ENCODE measurements at regions of chr11 and their contacts with region 1.

Region 1: GRCh38 chr11:64204464-64204989 is 2.0 kb upstream of the FERMT3 start:
- DNase-seq: peak; percentile 68 to 95 (median 83)
- ATAC-seq: peak; percentile 46 to 70 (median 48)
- H3K4me3 ChIP-seq: no peak overlapping the region
- H3K4me3 Mint-ChIP-seq: peak overlapping the region; percentile 17 to 68 (median 65)
- H3K27ac ChIP-seq: no peak overlapping the region
- H3K27ac Mint-ChIP-seq: peak overlapping the region; percentile 85 to 87
- H3K4me1 ChIP-seq: peaks cover 14 to 49% of the 10 kb centered on the region in 2 experiments
- H3K4me1 Mint-ChIP-seq: peaks cover 36 to 47% (median 47%) of the 10 kb centered on the region in 3 donors
- H3K27me3 ChIP-seq: no peaks in the 10 kb centered on the region
- H3K27me3 Mint-ChIP-seq: no peaks in the 10 kb centered on the region

Region 2: DNA sequence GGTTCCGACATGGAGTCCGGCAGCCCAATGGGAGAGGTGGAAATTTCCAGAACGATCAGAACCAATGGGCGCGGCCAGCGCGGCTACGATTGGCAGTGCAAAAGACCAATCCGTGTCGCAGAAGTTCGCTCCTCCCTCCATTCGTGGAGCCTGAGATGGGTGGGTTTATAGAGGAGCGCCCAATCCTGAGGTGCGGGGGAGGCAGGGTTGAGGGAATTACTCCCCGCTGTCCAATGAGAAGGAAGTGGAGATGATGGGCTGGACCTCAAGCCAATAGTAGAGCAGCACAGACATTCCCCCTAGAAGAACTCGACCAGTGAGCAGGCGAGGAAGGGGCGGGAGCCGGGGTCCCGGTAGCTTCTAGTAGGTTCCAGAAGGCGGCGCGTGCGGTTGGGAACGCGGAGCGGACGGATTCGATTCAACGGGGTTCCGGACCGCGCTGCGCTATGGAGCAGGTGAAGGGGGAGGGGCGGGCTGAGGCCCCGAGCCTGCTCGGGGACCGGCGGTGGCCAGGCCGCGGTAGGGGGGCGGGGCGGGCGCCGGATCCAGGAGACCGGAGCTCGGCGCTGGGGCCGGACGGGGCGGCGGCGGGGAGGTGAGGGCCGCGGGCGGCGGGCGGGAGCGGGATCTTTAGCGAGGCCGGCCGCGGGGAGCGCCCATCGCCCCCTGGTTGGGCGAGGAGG is 18.6 kb before region 1 on chr11 and contains the start of gene STIP1:
- CTCF ChIA-PET with region 1: interaction called in 1 of 2 experiments, 15 read pairs
- POLR2A ChIA-PET with region 1: interaction called in 1 of 2 experiments, 3 read pairs
- DNase-seq: peak; percentile 96 to 100 (median 99)
- ATAC-seq: peak; percentile 87 to 90 (median 88)
- H3K4me3 ChIP-seq: peak within 1 kb of the TSS; percentile 73 to 89
- H3K4me3 Mint-ChIP-seq: peak within 1 kb of the TSS in 2 of 3 donors; percentile 92 to 99
- H3K27ac ChIP-seq: peak within 1 kb of the TSS; percentile 40
- H3K27ac Mint-ChIP-seq: peak within 1 kb of the TSS; percentile 94 to 99
- H3K4me1 ChIP-seq: peaks cover 6 to 38% of the 10 kb centered on the region in 2 experiments
- H3K4me1 Mint-ChIP-seq: peaks cover 38 to 43% (median 42%) of the 10 kb centered on the region in 3 donors
- H3K27me3 ChIP-seq: no peaks in the 10 kb centered on the region
- H3K27me3 Mint-ChIP-seq: no peaks in the 10 kb centered on the region
- total RNA-seq, gene STIP1: 61.1 to 133 (median 107) TPM

Region 3: GRCh38 chr11:64261556-64262080 is 57.1 kb after region 1 on chr11:
- CTCF ChIA-PET with region 1: no interaction called
- POLR2A ChIA-PET with region 1: no interaction called
- DNase-seq: no peak
- ATAC-seq: peak in 1 of 4 experiments; percentile 4
- H3K4me3 ChIP-seq: no peak overlapping the region
- H3K4me3 Mint-ChIP-seq: no peak overlapping the region
- H3K27ac ChIP-seq: no peak overlapping the region
- H3K27ac Mint-ChIP-seq: no peak overlapping the region
- H3K4me1 ChIP-seq: peaks cover 0 to 7% of the 10 kb centered on the region in 2 experiments
- H3K4me1 Mint-ChIP-seq: peaks cover 0 to 9% (median 0%) of the 10 kb centered on the region in 3 donors
- H3K27me3 ChIP-seq: no peaks in the 10 kb centered on the region
- H3K27me3 Mint-ChIP-seq: no peaks in the 10 kb centered on the region

Region 4: GRCh38 chr11:64304316-64305072 is 100.0 kb after region 1 on chr11:
- CTCF ChIA-PET with region 1: interaction called, 20 to 122 read pairs
- POLR2A ChIA-PET with region 1: interaction called, 3 read pairs
- DNase-seq: peak; percentile 77 to 96 (median 90)
- ATAC-seq: peak; percentile 24 to 33 (median 31)
- H3K4me3 ChIP-seq: peak overlapping the region; percentile 88 to 89
- H3K4me3 Mint-ChIP-seq: peak overlapping the region; percentile 86 to 99 (median 92)
- H3K27ac ChIP-seq: peak overlapping the region; percentile 93
- H3K27ac Mint-ChIP-seq: peak overlapping the region; percentile 94
- H3K4me1 ChIP-seq: peaks cover 15 to 56% of the 10 kb centered on the region in 2 experiments
- H3K4me1 Mint-ChIP-seq: peaks cover 36 to 40% (median 38%) of the 10 kb centered on the region in 3 donors
- H3K27me3 ChIP-seq: peaks cover 0 to 45% of the 10 kb centered on the region in 2 experiments
- H3K27me3 Mint-ChIP-seq: peaks cover 10 to 23% of the 10 kb centered on the region in 2 donors

Region 5: GRCh38 chr11:64331557-64332371 is 127.2 kb after region 1 on chr11:
- CTCF ChIA-PET with region 1: interaction called in 1 of 2 experiments, 11 read pairs
- POLR2A ChIA-PET with region 1: no interaction called
- DNase-seq: peak in 34 of 35 experiments; percentile 40 to 80 (median 62)
- ATAC-seq: peak; percentile 78 to 93 (median 88)
- H3K4me3 ChIP-seq: no peak overlapping the region
- H3K4me3 Mint-ChIP-seq: no peak overlapping the region
- H3K27ac ChIP-seq: no peak overlapping the region
- H3K27ac Mint-ChIP-seq: peak overlapping the region; percentile 4 to 21
- H3K4me1 ChIP-seq: peaks cover 0 to 18% of the 10 kb centered on the region in 2 experiments
- H3K4me1 Mint-ChIP-seq: peaks cover 8 to 16% (median 8%) of the 10 kb centered on the region in 3 donors
- H3K27me3 ChIP-seq: no peaks in the 10 kb centered on the region
- H3K27me3 Mint-ChIP-seq: no peaks in the 10 kb centered on the region

Measured in T-cell (primary cell).